Common myeloid progenitor, CD34-positive (primary cell): ENCODE measurements at regions of chr2 and their contacts with region 1.

Region 1: GRCh38 chr2:157596992-157597681 is 31.5 kb downstream of the ACVR1C start:
- DNase-seq: peak; percentile 46 to 69 (median 65)
- H3K4me3 ChIP-seq: peak overlapping the region in 5 of 7 experiments; percentile 9 to 58 (median 34)
- H3K27ac ChIP-seq: no peak overlapping the region
- H3K4me1 ChIP-seq: peaks cover 0 to 3% (median 1%) of the 10 kb centered on the region in 4 experiments
- H3K27me3 ChIP-seq: peaks cover 0 to 2% (median 0%) of the 10 kb centered on the region in 5 experiments

Region 2: DNA sequence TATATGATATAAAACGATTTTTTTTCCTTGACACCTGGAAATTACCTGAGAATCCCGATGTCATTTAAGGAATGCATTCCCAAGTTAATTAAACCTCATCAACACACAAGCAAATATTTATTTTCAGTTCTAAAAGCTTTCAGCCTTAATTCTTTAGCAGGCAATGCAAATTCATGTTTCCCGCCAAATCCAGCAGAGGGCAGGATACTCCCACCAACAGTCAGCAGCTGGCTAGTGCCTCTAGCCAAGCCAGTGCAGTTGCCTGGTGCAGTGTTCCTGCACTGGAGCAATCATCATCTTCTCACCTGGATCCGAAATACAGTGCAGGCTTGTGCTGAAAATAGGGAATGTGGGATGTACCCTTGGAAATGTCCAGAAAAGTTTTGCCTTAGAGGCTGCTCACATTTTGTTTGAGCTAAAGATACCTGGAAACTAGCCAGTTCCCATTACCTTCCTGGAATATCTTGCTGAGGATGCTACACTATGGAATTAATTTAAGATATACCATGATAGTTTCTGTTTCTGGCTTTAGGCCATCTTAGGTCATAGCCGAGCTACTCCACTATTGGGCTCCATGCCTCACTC is 104.9 kb before region 1 on chr2:
- CTCF ChIA-PET with region 1: interaction called, 13 read pairs
- POLR2A ChIA-PET with region 1: interaction called, 3 read pairs
- DNase-seq: peak; percentile 71 to 86 (median 80)
- H3K4me3 ChIP-seq: no peak overlapping the region
- H3K27ac ChIP-seq: no peak overlapping the region
- H3K4me1 ChIP-seq: peaks cover 0 to 14% (median 7%) of the 10 kb centered on the region in 4 experiments
- H3K27me3 ChIP-seq: no peaks in the 10 kb centered on the region

Region 3: GRCh38 chr2:157784169-157784822 is 187.2 kb after region 1 on chr2:
- CTCF ChIA-PET with region 1: no interaction called
- POLR2A ChIA-PET with region 1: no interaction called
- DNase-seq: no peak
- H3K4me3 ChIP-seq: no peak overlapping the region
- H3K27ac ChIP-seq: no peak overlapping the region
- H3K4me1 ChIP-seq: peaks cover 0 to 12% (median 5%) of the 10 kb centered on the region in 4 experiments
- H3K27me3 ChIP-seq: no peaks in the 10 kb centered on the region